OCI-LY7 (cell line): ENCODE measurements at regions of chr15 and their contacts with region 1.

Region 1: GRCh38 chr15:88982304-88982945 is 69.2 kb upstream of the MFGE8 start:
- DNase-seq: peak; percentile 66
- H3K4me3 ChIP-seq: peak overlapping the region; percentile 5
- H3K27ac ChIP-seq: peak overlapping the region; percentile 54
- H3K4me1 ChIP-seq: peaks cover 17% of the 10 kb centered on the region
- CTCF ChIP-seq: no peak

Region 2: GRCh38 chr15:89003865-89004725 is 21.7 kb after region 1 on chr15:
- CTCF ChIA-PET with region 1: interaction called, 3 read pairs
- POLR2A ChIA-PET with region 1: interaction called, 3 read pairs
- intact Hi-C with region 1: loop called (anchors 2 kb)
- DNase-seq: peak; percentile 11
- H3K4me3 ChIP-seq: no peak overlapping the region
- H3K27ac ChIP-seq: no peak overlapping the region
- H3K4me1 ChIP-seq: no peaks in the 10 kb centered on the region
- CTCF ChIP-seq: peak; percentile 53

Region 3: GRCh38 chr15:89150762-89151664 is 168.6 kb after region 1 on chr15:
- CTCF ChIA-PET with region 1: no interaction called
- POLR2A ChIA-PET with region 1: no interaction called
- intact Hi-C with region 1: no loop called
- DNase-seq: no peak
- H3K4me3 ChIP-seq: no peak overlapping the region
- H3K27ac ChIP-seq: no peak overlapping the region
- H3K4me1 ChIP-seq: no peaks in the 10 kb centered on the region
- CTCF ChIP-seq: no peak